ENCODE measurements at regions of chr4 and their contacts with region 1.

Region 1: DNA sequence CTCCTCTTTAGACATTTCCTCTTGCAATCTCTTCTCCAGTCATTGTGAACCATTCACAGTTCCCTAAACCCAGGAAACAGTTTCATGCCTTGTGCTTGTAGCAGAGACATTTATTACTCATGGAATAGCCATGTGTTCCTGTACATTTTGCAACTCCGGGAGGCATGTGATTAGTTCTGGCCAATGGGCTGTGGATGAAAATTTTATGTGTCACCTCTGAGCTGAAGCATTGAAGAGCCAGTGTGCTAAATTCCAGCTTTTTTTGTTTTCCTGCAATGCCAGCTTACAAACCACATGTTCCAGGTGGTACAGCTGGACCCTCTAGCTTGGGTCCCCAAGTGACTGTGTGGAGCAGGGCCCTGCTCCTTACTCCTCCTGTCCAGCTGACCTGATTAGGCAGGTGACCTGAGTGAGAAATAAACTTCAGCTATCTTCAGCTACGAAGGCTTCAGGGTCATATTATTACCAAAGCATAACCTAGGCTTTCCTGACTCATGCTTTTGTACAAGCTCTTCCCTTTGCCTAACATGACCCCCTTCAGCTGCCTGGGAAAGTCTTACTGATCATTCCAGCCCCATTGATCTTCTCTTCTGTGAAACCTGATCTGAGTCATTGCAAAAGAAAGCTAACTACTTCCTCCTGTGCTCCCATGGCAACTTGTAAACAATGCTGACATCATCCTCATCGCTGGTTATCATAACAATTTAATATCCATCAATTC is 200.4 kb downstream of the PTTG2 start:
- DNase-seq: peak; percentile 72
- H3K4me3 Mint-ChIP-seq: no peak overlapping the region
- H3K27ac Mint-ChIP-seq: no peak overlapping the region
- H3K4me1 Mint-ChIP-seq: peaks cover 73% of the 10 kb centered on the region
- H3K27me3 Mint-ChIP-seq: no peaks in the 10 kb centered on the region

Region 2: GRCh38 chr4:38078590-38079421 is 81.8 kb before region 1 on chr4:
- CTCF ChIA-PET with region 1: no interaction called
- intact Hi-C with region 1: loop called (anchors 1 kb)
- DNase-seq: peak; percentile 21
- H3K4me3 Mint-ChIP-seq: no peak overlapping the region
- H3K27ac Mint-ChIP-seq: peak overlapping the region; percentile 57
- H3K4me1 Mint-ChIP-seq: peaks cover 31% of the 10 kb centered on the region
- H3K27me3 Mint-ChIP-seq: no peaks in the 10 kb centered on the region

Region 3: GRCh38 chr4:38149997-38150671 is 10.5 kb before region 1 on chr4:
- CTCF ChIA-PET with region 1: interaction called, 3 read pairs
- intact Hi-C with region 1: loop called (anchors 1 kb)
- DNase-seq: no peak
- H3K4me3 Mint-ChIP-seq: no peak overlapping the region
- H3K27ac Mint-ChIP-seq: no peak overlapping the region
- H3K4me1 Mint-ChIP-seq: peaks cover 14% of the 10 kb centered on the region
- H3K27me3 Mint-ChIP-seq: no peaks in the 10 kb centered on the region

Region 4: DNA sequence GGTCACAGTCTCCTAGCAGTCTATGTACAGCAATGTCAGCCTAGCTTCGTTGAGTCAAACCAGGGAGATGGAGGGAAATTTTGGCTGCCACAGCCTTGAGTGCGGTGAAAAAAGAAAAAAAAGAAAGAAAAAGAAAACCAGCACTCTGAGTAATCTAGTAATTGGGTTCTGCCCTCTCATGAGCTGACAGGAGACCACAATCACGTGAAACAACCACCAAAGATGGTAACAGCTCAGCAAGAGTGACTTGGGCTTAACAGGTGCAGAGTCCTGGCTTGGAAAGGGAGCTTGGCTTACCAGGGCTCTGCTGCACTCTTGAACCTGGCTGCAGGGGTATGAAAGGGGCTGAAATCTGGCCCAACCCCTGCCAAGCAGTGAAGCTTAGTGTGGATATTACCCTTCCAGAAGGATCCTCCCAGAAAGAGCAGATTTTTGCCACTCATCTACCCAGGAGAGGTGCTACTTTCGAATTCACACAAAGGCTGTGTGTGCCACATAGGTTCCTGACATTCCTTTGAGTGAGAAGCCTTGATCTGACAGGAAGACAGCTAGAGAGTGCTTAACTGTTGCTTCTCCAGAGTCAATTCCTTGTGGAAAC is 149.9 kb after region 1 on chr4:
- CTCF ChIA-PET with region 1: no interaction called
- intact Hi-C with region 1: loop called (anchors 1 kb)
- DNase-seq: peak; percentile 89
- H3K4me3 Mint-ChIP-seq: peak overlapping the region; percentile 10
- H3K27ac Mint-ChIP-seq: peak overlapping the region; percentile 72
- H3K4me1 Mint-ChIP-seq: peaks cover 65% of the 10 kb centered on the region
- H3K27me3 Mint-ChIP-seq: peaks cover 2% of the 10 kb centered on the region

Region 5: GRCh38 chr4:38601244-38601897 is 440.7 kb after region 1 on chr4:
- CTCF ChIA-PET with region 1: no interaction called
- intact Hi-C with region 1: no loop called
- DNase-seq: no peak
- H3K4me3 Mint-ChIP-seq: no peak overlapping the region
- H3K27ac Mint-ChIP-seq: no peak overlapping the region
- H3K4me1 Mint-ChIP-seq: peaks cover 20% of the 10 kb centered on the region
- H3K27me3 Mint-ChIP-seq: no peaks in the 10 kb centered on the region

Measured in activated naive CD4-positive, alpha-beta T cell treated with anti-CD3 and anti-CD28 coated beads for 36 hours (primary cell).